Right ventricle myocardium superior (tissue), 1 donor: ENCODE measurements at regions of chr1 and their contacts with region 1.

Region 1: DNA sequence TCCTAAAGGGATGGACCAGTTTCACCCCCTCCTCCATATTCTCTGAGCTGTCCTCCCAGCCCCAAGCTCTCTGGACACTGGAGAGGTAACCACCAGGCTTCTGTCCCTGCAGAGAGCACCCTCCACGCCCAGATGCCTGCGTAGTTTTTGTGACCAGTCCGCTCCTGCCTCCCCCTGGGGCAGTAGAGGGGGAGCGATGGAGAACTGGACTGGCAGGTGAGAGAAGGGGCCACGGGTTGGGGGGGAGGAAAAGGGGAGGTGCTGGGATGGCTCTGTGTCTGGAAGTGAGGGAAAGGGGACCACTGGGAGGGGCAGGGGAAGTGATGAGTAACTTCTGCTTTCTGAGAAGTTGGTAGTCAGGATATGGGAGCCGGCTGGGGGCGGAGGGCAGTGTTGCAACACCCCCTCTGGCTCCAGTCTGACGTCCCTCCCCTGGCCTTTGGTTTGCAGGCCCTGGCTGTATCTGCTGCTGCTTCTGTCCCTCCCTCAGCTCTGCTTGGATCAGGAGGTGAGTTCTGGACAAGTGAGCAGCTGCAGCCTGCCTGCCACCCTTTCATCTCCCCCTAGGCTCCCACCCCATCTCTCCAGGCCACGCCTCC is 3.0 kb downstream of the ADAMTSL4 start:
- DNase-seq: peak; percentile 92
- ATAC-seq: peak; percentile 57

Region 2: GRCh38 chr1:150596095-150596892 is 44.1 kb after region 1 on chr1:
- intact Hi-C with region 1: no loop called
- DNase-seq: no peak
- ATAC-seq: no peak

Region 3: DNA sequence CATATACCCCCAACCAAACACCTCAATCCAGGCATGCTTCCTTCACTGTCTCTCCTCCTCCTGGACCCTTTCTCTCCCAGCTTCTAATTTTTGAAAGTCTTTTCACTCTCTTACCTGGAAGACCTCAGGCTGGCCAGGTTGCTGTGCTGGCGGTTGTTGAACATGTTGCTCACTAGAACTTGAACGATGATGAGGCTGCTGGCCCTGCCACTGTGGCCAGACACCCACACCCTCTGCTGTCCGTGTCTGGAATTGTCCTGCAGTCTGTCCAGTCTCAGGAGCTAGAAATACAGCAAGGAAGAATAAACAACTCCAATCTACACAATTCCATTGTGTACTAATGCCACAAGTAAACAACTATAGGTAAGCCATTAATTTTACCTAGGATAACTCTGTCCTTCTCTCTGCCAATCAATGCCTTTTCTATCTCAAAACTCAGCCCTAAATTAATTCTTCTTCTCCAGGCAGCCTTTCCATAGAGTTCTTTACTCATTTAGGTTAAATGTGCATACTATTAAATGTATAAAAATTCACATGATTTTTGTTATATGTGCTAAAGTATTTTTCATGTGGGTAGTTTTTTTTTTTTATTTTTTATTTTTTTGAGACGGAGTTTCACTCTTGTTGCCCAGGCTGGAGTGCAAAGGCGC is 261.0 kb after region 1 on chr1:
- intact Hi-C with region 1: loop called (anchors 10 kb)
- DNase-seq: peak; percentile 72
- ATAC-seq: peak; percentile 84